Activated CD8-positive, alpha-beta memory T cell treated with anti-CD3 and anti-CD28 coated beads, Interleukin-2, amount 10 ng/mL, durations not matched to agents 7 days and 5 days (primary cell): ENCODE measurements at regions of chr19 and their contacts with region 1.

Region 1: GRCh38 chr19:7355151-7355820 is 6.5 kb downstream of the ARHGEF18 start:
- DNase-seq: no peak
- ATAC-seq: no peak
- H3K4me3 Mint-ChIP-seq: no peak overlapping the region
- H3K27ac Mint-ChIP-seq: no peak overlapping the region
- H3K4me1 Mint-ChIP-seq: peaks cover 36% of the 10 kb centered on the region
- H3K27me3 Mint-ChIP-seq: no peaks in the 10 kb centered on the region

Region 2: GRCh38 chr19:7242601-7243258 is 112.6 kb before region 1 on chr19:
- CTCF ChIA-PET with region 1: no interaction called
- DNase-seq: no peak
- ATAC-seq: no peak
- H3K4me3 Mint-ChIP-seq: no peak overlapping the region
- H3K27ac Mint-ChIP-seq: no peak overlapping the region
- H3K4me1 Mint-ChIP-seq: no peaks in the 10 kb centered on the region
- H3K27me3 Mint-ChIP-seq: no peaks in the 10 kb centered on the region

Region 3: GRCh38 chr19:7340959-7341837 is 14.1 kb before region 1 on chr19:
- CTCF ChIA-PET with region 1: interaction called, 35 read pairs
- DNase-seq: peak; percentile 88
- ATAC-seq: peak; percentile 18
- H3K4me3 Mint-ChIP-seq: no peak overlapping the region
- H3K27ac Mint-ChIP-seq: peak overlapping the region; percentile 80
- H3K4me1 Mint-ChIP-seq: peaks cover 62% of the 10 kb centered on the region
- H3K27me3 Mint-ChIP-seq: no peaks in the 10 kb centered on the region

Region 4: GRCh38 chr19:7366701-7367420 is 11.6 kb after region 1 on chr19:
- CTCF ChIA-PET with region 1: interaction called, 23 read pairs
- DNase-seq: peak; percentile 50
- ATAC-seq: peak; percentile 78
- H3K4me3 Mint-ChIP-seq: no peak overlapping the region
- H3K27ac Mint-ChIP-seq: peak overlapping the region; percentile 52
- H3K4me1 Mint-ChIP-seq: peaks cover 4% of the 10 kb centered on the region
- H3K27me3 Mint-ChIP-seq: no peaks in the 10 kb centered on the region

Region 5: GRCh38 chr19:7382694-7383093 is 27.4 kb after region 1 on chr19:
- CTCF ChIA-PET with region 1: interaction called, 17 read pairs
- DNase-seq: no peak
- ATAC-seq: no peak
- H3K4me3 Mint-ChIP-seq: no peak overlapping the region
- H3K27ac Mint-ChIP-seq: no peak overlapping the region
- H3K4me1 Mint-ChIP-seq: peaks cover 10% of the 10 kb centered on the region
- H3K27me3 Mint-ChIP-seq: no peaks in the 10 kb centered on the region

Region 6: DNA sequence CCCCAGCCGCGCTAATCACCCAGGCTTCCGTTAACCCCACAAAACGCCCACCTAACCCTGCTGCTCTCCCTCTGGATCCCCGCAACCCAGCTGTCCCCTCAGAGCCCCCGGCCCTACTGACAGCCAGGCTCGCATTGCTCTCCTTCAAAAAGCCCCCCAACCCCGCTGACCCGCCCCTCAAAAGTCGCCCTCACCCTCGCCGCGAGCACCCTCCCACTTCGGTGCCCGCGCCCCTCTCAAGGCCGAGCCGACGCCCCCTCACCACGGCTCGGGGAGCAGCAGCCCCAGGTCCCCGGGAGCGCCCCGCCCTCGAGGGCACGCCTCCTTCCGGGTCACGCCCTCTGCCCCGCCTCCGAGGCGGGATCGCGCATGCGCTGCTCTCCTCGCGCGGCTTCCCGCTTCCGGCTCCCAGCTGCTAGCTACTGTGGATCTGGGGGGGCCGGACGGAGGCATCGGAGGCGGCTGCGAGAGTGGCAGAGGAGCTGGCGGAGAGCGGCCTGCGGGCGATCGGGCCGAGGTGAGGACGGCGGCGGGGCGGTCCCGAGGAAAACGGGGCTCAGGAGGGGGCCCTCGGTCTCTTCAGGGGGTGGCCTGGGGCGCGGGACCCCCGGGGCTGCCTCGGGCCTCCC is 39.6 kb after region 1 on chr19:
- CTCF ChIA-PET with region 1: interaction called, 29 read pairs
- DNase-seq: peak; percentile 94
- ATAC-seq: peak; percentile 97
- H3K4me3 Mint-ChIP-seq: peak overlapping the region; percentile 83
- H3K27ac Mint-ChIP-seq: peak overlapping the region; percentile 79
- H3K4me1 Mint-ChIP-seq: peaks cover 39% of the 10 kb centered on the region
- H3K27me3 Mint-ChIP-seq: no peaks in the 10 kb centered on the region